ENCODE measurements at regions of chr7 and their contacts with region 1.

Region 1: GRCh38 chr7:72785166-72785955 is 42.6 kb downstream of the TYW1B start:
- DNase-seq: no peak
- H3K4me3 ChIP-seq: no peak overlapping the region
- H3K27ac ChIP-seq: no peak overlapping the region
- H3K4me1 ChIP-seq: peaks cover 3% of the 10 kb centered on the region
- H3K27me3 ChIP-seq: no peaks in the 10 kb centered on the region
- CTCF ChIP-seq: no peak
- POLR2A ChIP-seq: no peak

Region 2: GRCh38 chr7:71752171-71752935 is 1033.0 kb before region 1 on chr7:
- CTCF ChIA-PET with region 1: interaction called, 5 read pairs
- POLR2A ChIA-PET with region 1: no interaction called
- dilution Hi-C with region 1: no loop called
- intact Hi-C with region 1: loop called (anchors 10 kb)
- DNase-seq: no peak
- H3K4me3 ChIP-seq: no peak overlapping the region
- H3K27ac ChIP-seq: no peak overlapping the region
- H3K4me1 ChIP-seq: no peaks in the 10 kb centered on the region
- H3K27me3 ChIP-seq: no peaks in the 10 kb centered on the region
- CTCF ChIP-seq: peak; percentile 32 to 41
- POLR2A ChIP-seq: no peak

Region 3: GRCh38 chr7:71817916-71818315 is 967.4 kb before region 1 on chr7:
- CTCF ChIA-PET with region 1: no interaction called
- POLR2A ChIA-PET with region 1: no interaction called
- dilution Hi-C with region 1: no loop called
- intact Hi-C with region 1: no loop called
- DNase-seq: no peak
- H3K4me3 ChIP-seq: no peak overlapping the region
- H3K27ac ChIP-seq: no peak overlapping the region
- H3K4me1 ChIP-seq: no peaks in the 10 kb centered on the region
- H3K27me3 ChIP-seq: no peaks in the 10 kb centered on the region
- CTCF ChIP-seq: no peak
- POLR2A ChIP-seq: no peak

Region 4: GRCh38 chr7:72751978-72752377 is 33.4 kb before region 1 on chr7:
- CTCF ChIA-PET with region 1: interaction called, 16 read pairs
- POLR2A ChIA-PET with region 1: no interaction called
- dilution Hi-C with region 1: no loop called
- intact Hi-C with region 1: loop called (anchors 2 kb)
- DNase-seq: peak; percentile 48
- H3K4me3 ChIP-seq: no peak overlapping the region
- H3K27ac ChIP-seq: no peak overlapping the region
- H3K4me1 ChIP-seq: no peaks in the 10 kb centered on the region
- H3K27me3 ChIP-seq: no peaks in the 10 kb centered on the region
- CTCF ChIP-seq: peak; percentile 35 to 66
- POLR2A ChIP-seq: no peak

Measured in endothelial cell of umbilical vein (primary cell).